ENCODE measurements at regions of chr10 and their contacts with region 1.

Region 1: DNA sequence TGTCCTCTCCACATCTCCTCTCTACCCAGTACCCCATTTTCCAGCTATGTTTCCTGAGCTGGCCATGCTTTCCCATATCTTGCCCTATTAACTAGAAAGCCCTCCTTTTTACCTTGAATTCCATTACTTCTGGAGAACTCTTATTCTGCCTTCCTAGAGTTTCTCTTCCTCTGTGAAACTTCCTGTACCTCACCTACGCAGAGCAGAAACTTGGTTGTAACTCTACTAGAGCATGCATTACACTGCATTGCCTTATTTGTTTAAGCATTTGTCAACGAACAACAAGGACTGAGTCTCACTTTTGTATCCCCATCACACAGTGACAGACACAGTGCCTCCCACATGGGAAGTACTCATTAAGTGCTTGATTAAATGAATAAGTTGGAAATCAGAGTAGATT is 36.4 kb downstream of the VCL start:
- DNase-seq: no peak
- ATAC-seq: no peak

Region 2: GRCh38 chr10:73997787-73998622 is 36.3 kb before region 1 on chr10 and contains the start of gene VCL:
- intact Hi-C with region 1: loop called in 1 of 2 experiments (anchors 5 kb)
- DNase-seq: peak; percentile 98
- ATAC-seq: peak; percentile 96
- total RNA-seq, gene VCL: 170 to 239 TPM

Measured in left cardiac atrium (tissue), 4 donors.